AG04450 (cell line): ENCODE measurements at regions of chr11 and their contacts with region 1.

Region 1: DNA sequence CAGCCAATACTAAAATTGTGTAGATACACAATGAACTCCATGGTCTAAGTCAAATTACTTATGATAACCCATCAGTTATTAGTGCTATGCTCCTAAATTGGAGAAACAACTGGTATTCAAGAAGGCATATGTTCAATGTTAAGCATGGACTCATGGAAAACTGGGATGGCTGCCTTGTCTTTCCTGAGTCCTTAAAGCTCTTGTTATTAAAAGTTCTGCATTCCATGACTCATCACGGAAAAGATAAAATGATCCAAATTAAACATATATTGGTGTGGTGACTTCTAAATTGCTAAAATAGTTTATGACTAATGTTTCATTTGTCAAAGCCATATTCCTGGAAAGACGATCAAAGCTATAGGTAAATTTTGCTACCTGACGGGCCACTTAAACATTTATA is 9.4 kb upstream of the EI24 start:
- DNase-seq: no peak
- H3K4me3 ChIP-seq: no peak overlapping the region
- H3K27ac ChIP-seq: no peak overlapping the region
- H3K27me3 ChIP-seq: peaks cover 3% of the 10 kb centered on the region
- CTCF ChIP-seq: no peak

Region 2: GRCh38 chr11:124719534-124719933 is 840.4 kb before region 1 on chr11:
- CTCF ChIA-PET with region 1: interaction called, 11 read pairs
- POLR2A ChIA-PET with region 1: no interaction called
- DNase-seq: no peak
- H3K4me3 ChIP-seq: no peak overlapping the region
- H3K27ac ChIP-seq: no peak overlapping the region
- H3K27me3 ChIP-seq: peaks cover 45% of the 10 kb centered on the region
- CTCF ChIP-seq: no peak

Region 3: DNA sequence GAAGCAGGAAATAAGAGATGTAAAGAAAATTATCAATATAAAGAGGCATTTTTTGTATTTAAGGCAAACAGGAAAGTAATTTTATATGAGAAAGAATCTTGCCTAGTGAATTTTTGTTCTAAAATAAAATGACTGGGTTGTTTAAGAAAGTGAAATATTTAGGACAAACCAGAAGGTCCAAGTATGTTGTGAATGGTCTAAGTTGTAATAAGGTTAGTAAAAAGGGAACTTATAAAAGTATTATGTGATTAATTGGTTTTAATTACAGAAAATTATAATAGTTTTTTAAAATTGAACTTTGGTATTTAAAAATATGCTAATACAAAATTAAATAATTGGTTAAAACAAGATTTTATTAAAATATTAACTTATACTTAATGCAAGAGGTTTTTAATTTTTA is 17.2 kb before region 1 on chr11:
- CTCF ChIA-PET with region 1: no interaction called
- POLR2A ChIA-PET with region 1: no interaction called
- DNase-seq: no peak
- H3K4me3 ChIP-seq: no peak overlapping the region
- H3K27ac ChIP-seq: no peak overlapping the region
- H3K27me3 ChIP-seq: peaks cover 2% of the 10 kb centered on the region
- CTCF ChIP-seq: no peak